ENCODE measurements at regions of chr9 and their contacts with region 1.

Region 1: DNA sequence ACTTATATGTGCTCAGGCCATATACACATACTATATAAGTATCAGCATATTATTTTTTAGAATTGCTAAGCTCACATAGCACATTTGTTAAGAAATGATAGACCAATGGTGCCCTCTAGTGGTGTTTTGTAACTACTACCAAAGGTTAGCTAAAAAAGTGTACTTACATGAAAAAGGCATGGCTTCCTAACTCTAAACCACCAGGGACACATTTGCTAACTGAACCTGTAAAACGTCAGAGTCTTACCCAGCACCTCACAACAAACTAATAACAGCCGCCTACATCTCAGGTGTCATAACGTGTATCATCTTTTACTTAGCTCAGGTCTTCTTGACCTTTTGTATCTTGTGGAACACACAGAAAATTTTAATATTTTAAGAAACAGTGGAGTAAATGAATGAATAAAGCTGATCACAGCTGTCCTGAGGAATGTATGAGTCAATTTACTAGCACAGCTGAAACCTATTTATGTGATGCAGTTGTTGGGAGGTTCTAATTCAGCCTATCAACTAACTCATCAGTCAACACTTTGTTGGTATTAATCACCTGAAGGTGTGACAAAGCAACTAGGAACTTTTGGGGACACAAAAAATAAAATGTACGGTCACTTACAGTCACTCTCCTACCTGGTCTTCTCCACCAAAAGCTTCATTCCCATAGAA is 72.9 kb downstream of the BAAT start:
- DNase-seq: no peak
- ATAC-seq: no peak

Region 2: GRCh38 chr9:100598641-100599145 is 713.2 kb before region 1 on chr9:
- intact Hi-C with region 1: loop called (anchors 5 kb)
- DNase-seq: peak; percentile 91
- ATAC-seq: peak; percentile 87

Region 3: GRCh38 chr9:100714372-100715099 is 597.4 kb before region 1 on chr9:
- intact Hi-C with region 1: loop called (anchors 5 kb)
- DNase-seq: peak; percentile 59
- ATAC-seq: peak; percentile 59

Measured in left ventricle myocardium superior (tissue), 1 donor.